A549 (cell line): ENCODE measurements at regions of chr10 and their contacts with region 1.

Region 1: DNA sequence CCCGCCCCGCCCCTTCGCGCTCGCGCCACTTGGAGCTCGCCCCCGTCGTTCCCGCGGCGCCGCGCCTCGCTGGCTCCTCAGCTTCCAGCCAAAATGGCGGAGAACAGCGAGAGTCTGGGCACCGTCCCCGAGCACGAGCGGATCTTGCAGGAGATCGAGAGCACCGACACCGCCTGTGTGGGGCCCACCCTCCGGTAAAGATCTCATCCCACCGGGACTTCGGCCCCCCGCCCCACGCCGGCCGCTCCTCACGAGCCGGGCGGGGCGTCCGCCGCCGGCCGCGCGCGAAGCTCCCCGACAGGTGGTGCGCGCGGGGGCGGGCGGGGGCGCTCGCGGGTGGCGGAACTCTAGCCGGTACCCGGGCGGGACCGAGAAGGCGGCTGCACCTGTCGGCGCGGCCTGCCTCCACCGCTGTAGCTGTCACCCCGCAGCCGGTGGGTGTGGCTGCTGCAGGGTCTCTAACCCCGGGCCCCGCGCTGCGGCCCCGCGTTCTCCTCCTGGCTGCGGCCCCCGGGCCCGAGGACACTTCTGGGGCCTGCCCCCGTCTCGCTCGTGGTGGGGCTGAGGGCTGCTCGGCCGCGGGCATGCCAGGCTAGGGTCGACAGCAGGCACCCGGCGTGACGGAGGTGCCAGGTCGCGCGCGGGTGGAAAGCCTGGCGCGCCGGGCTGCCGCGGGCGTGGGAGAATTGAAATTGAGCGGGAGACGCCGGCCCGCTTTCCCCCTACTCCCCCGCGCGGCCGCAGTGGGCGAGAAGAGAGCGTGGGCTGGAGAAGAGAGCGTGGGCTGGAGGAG is at the start of gene EXOC6:
- DNase-seq: peak; percentile 54 to 88
- ATAC-seq: peak; percentile 88 to 90
- H3K4me3 ChIP-seq: peak within 1 kb of the TSS; percentile 99
- H3K27ac ChIP-seq: peak within 1 kb of the TSS; percentile 95 to 99
- H3K4me1 ChIP-seq: peaks cover 18% of the 10 kb centered on the region
- CTCF ChIP-seq: peak; percentile 49
- EP300 ChIP-seq: no peak
- POLR2A ChIP-seq: peak; percentile 72
- RAD21 ChIP-seq: peak in 1 of 2 experiments; percentile 44; a peak in 2 of 5 replicates
- polyA plus RNA-seq, gene EXOC6: 48.5 and 50.4 TPM in 2 replicates

Region 2: DNA sequence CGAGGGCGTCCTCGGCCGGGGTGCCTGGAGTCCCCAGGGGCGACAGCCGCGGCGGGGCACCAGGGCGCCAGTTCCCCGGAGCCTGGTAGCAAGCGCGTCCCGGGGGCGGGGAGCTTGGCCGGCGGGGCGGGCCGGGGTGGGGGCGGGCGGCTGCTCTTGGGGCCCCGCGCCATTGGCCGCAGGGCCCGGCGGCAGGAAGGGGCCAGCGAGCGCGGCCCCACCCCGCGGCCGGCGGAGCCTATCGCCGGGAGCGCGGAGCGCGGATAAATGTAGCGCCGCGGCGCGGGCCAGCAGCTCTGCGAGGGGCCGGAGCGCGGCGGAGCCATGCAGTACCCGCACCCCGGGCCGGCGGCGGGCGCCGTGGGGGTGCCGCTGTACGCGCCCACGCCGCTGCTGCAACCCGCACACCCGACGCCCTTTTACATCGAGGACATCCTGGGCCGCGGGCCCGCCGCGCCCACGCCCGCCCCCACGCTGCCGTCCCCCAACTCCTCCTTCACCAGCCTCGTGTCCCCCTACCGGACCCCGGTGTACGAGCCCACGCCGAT is 158.9 kb before region 1 on chr10 and contains the start of gene HHEX:
- CTCF ChIA-PET with region 1: interaction called, 6 read pairs
- POLR2A ChIA-PET with region 1: interaction called, 31 read pairs
- DNase-seq: peak; percentile 57 to 78
- ATAC-seq: peak; percentile 89
- H3K4me3 ChIP-seq: peak within 1 kb of the TSS; percentile 97
- H3K27ac ChIP-seq: peak within 1 kb of the TSS; percentile 95 to 97
- H3K4me1 ChIP-seq: peaks cover 42% of the 10 kb centered on the region
- CTCF ChIP-seq: no peak; the same call in 2 of the 3 replicates
- EP300 ChIP-seq: no peak
- POLR2A ChIP-seq: peak; percentile 82
- RAD21 ChIP-seq: no peak; a peak in 1 of 5 replicates
- polyA plus RNA-seq, gene HHEX: 25.2 and 28.1 TPM in 2 replicates

Region 3: GRCh38 chr10:92829042-92829785 is 19.4 kb before region 1 on chr10:
- CTCF ChIA-PET with region 1: interaction called, 21 read pairs
- POLR2A ChIA-PET with region 1: no interaction called
- DNase-seq: no peak
- ATAC-seq: no peak
- H3K4me3 ChIP-seq: no peak overlapping the region
- H3K27ac ChIP-seq: no peak overlapping the region
- H3K4me1 ChIP-seq: no peaks in the 10 kb centered on the region; the same call in 2 of the 3 replicates
- CTCF ChIP-seq: no peak
- EP300 ChIP-seq: no peak
- POLR2A ChIP-seq: no peak
- RAD21 ChIP-seq: no peak

Region 4: DNA sequence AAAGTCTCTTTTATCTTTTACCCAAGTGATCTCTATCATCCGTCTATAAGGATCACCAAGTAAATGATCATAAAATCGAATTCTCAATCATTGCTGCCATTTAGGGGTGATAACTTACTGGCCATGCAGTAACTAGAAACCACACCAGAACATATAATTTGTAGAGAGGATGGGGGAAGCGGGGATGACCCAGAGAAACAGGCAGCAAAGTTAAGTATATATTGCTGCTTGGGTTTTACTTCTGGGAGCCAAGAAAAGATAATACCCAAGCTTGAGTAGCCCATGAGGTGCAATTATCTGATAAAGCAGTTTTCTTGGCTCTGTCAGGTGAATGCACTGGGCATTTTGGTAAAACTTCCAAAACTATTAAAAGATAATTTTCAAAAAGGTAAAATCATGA is 18.6 kb after region 1 on chr10:
- CTCF ChIA-PET with region 1: interaction called, 29 read pairs
- POLR2A ChIA-PET with region 1: interaction called, 5 read pairs
- DNase-seq: no peak
- ATAC-seq: no peak
- H3K4me3 ChIP-seq: no peak overlapping the region
- H3K27ac ChIP-seq: no peak overlapping the region
- H3K4me1 ChIP-seq: peaks cover 23% of the 10 kb centered on the region
- CTCF ChIP-seq: no peak
- EP300 ChIP-seq: no peak
- POLR2A ChIP-seq: no peak
- RAD21 ChIP-seq: no peak

Region 5: DNA sequence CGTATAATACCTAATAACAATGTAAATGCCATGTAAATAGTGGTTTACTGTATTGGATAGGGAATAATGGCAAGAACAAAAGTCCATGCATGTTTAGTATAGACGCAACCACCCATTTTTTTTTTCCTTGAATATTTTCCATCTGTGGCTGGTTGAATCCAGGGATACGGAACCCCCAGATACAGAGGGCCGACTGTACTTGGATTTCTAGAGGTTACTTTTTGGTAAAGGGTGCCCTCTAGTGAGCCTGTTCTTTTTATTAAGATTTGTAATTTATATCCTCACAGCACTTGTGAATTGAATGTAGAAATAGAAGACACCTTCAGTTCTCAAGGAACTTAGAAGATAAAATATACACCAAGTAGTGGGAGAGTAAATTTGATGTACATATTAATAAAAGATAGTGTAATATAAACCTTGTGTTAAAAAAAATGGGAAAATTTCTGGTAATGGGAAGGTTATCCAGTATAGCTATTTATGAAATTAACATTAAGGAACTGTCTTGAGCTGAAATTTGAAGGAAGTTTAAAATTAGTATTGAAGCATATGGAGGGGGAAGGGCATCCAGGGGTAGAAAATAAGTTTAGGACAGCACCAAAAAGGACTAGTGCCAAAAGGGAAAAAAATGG is 31.7 kb after region 1 on chr10:
- CTCF ChIA-PET with region 1: interaction called, 17 read pairs
- POLR2A ChIA-PET with region 1: interaction called, 3 read pairs
- DNase-seq: peak; percentile 30 to 66
- ATAC-seq: peak; percentile 74 to 89; a peak in 5 of 6 replicates
- H3K4me3 ChIP-seq: no peak overlapping the region
- H3K27ac ChIP-seq: no peak overlapping the region
- H3K4me1 ChIP-seq: peaks cover 14% of the 10 kb centered on the region; the same call in 2 of the 3 replicates
- CTCF ChIP-seq: peak; percentile 83
- EP300 ChIP-seq: no peak
- POLR2A ChIP-seq: no peak
- RAD21 ChIP-seq: peak; percentile 81 to 89

Region 6: DNA sequence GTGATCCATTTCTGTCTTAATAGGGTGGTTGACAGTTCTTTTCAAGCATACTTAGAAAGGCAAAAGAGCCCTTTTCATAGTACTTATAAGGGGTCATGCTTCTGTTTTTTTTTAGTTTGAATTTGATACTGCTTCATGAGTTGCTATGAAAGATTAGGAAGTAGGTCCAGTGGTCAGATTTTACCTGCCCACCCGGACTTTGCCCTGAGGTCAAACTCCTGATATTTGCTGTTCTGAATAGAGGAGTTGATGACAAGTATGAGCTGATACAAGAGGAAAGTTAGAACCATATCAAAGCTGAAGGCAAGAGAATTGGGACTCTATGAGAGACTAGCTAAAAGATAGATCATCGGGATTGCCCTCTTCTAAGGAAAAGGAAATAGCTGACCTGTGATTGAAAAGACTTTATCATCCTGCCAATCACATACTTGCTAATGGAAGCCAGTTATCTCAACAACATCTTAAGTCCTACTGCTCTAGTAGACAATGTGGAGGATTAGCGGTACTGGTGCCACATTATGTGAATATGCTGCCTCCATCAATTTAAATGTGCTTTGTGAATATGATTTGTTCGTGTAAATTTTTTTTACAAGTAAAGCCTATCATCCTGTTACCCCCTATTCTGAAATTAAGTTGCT is 174.5 kb after region 1 on chr10:
- CTCF ChIA-PET with region 1: no interaction called
- POLR2A ChIA-PET with region 1: no interaction called
- DNase-seq: no peak
- ATAC-seq: no peak
- H3K4me3 ChIP-seq: no peak overlapping the region
- H3K27ac ChIP-seq: no peak overlapping the region
- H3K4me1 ChIP-seq: peaks cover 7% of the 10 kb centered on the region
- CTCF ChIP-seq: no peak
- EP300 ChIP-seq: no peak
- POLR2A ChIP-seq: no peak
- RAD21 ChIP-seq: no peak